ENCODE measurements at regions of chr18 and their contacts with region 1.

Region 1: DNA sequence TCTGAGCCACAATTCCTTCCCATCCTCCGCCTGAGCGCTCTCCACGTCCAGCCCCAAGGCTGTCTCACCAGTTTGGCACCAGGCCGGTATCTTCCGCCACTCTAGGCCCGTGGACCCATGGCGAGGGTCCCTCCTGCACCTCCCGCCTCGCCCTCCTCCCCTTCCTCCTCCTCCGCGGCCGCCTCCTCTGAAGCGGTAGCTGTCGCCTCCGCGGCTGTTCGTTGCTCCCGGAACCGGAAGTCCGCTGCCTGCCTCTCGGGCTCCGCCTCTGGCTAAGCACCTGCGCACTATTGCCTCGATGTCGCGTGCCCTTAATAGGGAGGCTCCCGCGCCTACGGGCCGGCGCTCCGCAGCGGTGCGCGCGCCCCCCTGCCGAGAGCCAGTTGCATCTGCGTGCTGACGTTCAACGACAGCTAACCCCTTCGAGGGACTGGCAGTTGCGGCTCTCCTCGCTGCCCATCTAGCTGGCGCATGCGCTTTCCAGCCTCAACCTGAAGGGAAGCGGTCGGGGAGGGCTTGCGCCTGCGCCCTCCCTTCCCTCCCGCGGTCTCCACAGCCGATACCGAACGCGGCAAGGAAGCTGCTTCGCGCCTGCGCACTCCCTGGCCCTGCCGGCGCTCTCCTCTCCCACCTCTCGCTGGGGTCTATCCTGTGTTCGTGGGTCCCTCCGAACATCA is at the start of gene MBD1:
- DNase-seq: peak; percentile 94
- H3K4me3 Mint-ChIP-seq: peak within 1 kb of the TSS; percentile 91
- H3K27ac Mint-ChIP-seq: peak within 1 kb of the TSS; percentile 87
- H3K4me1 Mint-ChIP-seq: peaks cover 40% of the 10 kb centered on the region
- H3K27me3 Mint-ChIP-seq: no peaks in the 10 kb centered on the region
- total RNA-seq, gene MBD1: 94.8 and 95.2 TPM in 2 replicates

Region 2: GRCh38 chr18:49486953-49487710 is 794.3 kb before region 1 on chr18 and contains the start of gene C18orf32:
- intact Hi-C with region 1: loop called (anchors 2 kb)
- DNase-seq: peak; percentile 92
- H3K4me3 Mint-ChIP-seq: peak within 1 kb of the TSS; percentile 93
- H3K27ac Mint-ChIP-seq: peak within 1 kb of the TSS; percentile 98
- H3K4me1 Mint-ChIP-seq: peaks cover 53% of the 10 kb centered on the region
- H3K27me3 Mint-ChIP-seq: no peaks in the 10 kb centered on the region
- total RNA-seq, gene C18orf32: 28.7 and 31.2 TPM in 2 replicates

Region 3: GRCh38 chr18:50297621-50298442 is 16.4 kb after region 1 on chr18:
- intact Hi-C with region 1: loop called (anchors 1 kb)
- DNase-seq: peak; percentile 59
- H3K4me3 Mint-ChIP-seq: peak overlapping the region; percentile 74
- H3K27ac Mint-ChIP-seq: no peak overlapping the region
- H3K4me1 Mint-ChIP-seq: peaks cover 15% of the 10 kb centered on the region
- H3K27me3 Mint-ChIP-seq: peaks cover 24% of the 10 kb centered on the region

Region 4: DNA sequence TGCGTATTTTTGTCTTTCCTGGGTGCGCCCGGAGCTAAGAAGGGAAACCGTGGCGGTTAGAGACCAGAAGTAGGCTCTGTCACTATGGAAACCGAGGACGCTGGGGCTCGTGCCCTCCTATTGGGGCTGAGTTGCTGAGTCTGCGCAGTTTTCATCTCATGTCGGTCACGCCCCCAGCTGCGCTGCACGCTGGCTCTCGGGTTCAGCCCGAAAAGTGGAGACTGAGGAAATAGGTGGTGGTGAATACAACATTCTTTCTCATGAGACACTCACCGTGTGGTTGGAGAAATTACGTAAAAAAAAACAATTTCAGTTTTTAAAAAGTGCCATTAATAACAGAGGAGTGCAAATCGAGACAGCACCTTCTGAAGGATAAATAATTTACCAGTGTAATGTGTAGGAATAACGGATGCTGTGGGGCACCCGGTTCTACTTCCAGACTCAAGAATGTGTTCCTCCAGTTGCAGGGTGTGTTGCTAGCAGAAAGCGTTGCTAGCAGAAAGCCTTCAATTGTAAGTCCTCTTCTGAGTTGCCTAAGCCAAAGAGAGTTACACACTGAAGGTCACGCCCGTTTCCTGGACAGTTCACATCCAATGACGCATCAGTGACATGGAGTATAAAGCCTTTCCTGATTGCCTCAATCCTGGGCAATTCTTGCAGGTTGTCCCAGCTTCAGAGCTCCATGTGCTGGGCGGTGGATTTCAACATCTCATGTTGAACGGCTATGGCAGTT is 26.5 kb after region 1 on chr18:
- intact Hi-C with region 1: loop called (anchors 1 kb)
- DNase-seq: peak; percentile 85
- H3K4me3 Mint-ChIP-seq: peak overlapping the region; percentile 90
- H3K27ac Mint-ChIP-seq: peak overlapping the region; percentile 57
- H3K4me1 Mint-ChIP-seq: peaks cover 18% of the 10 kb centered on the region
- H3K27me3 Mint-ChIP-seq: peaks cover 27% of the 10 kb centered on the region

Region 5: GRCh38 chr18:50374753-50375391 is 93.4 kb after region 1 on chr18 and contains the start of gene SKA1:
- intact Hi-C with region 1: loop called (anchors 1 kb)
- DNase-seq: peak; percentile 89
- H3K4me3 Mint-ChIP-seq: peak within 1 kb of the TSS; percentile 91
- H3K27ac Mint-ChIP-seq: peak within 1 kb of the TSS; percentile 81
- H3K4me1 Mint-ChIP-seq: peaks cover 23% of the 10 kb centered on the region
- H3K27me3 Mint-ChIP-seq: peaks cover 2% of the 10 kb centered on the region
- total RNA-seq, gene SKA1: 20.7 and 23.3 TPM in 2 replicates

Region 6: GRCh38 chr18:50886929-50887328 is 605.5 kb after region 1 on chr18:
- intact Hi-C with region 1: no loop called
- DNase-seq: no peak
- H3K4me3 Mint-ChIP-seq: no peak overlapping the region
- H3K27ac Mint-ChIP-seq: no peak overlapping the region
- H3K4me1 Mint-ChIP-seq: peaks cover 5% of the 10 kb centered on the region
- H3K27me3 Mint-ChIP-seq: no peaks in the 10 kb centered on the region